Activated CD8-positive, alpha-beta T cell treated with anti-CD3 and anti-CD28 coated beads for 36 hours (primary cell): ENCODE measurements at regions of chr13 and their contacts with region 1.

Region 1: DNA sequence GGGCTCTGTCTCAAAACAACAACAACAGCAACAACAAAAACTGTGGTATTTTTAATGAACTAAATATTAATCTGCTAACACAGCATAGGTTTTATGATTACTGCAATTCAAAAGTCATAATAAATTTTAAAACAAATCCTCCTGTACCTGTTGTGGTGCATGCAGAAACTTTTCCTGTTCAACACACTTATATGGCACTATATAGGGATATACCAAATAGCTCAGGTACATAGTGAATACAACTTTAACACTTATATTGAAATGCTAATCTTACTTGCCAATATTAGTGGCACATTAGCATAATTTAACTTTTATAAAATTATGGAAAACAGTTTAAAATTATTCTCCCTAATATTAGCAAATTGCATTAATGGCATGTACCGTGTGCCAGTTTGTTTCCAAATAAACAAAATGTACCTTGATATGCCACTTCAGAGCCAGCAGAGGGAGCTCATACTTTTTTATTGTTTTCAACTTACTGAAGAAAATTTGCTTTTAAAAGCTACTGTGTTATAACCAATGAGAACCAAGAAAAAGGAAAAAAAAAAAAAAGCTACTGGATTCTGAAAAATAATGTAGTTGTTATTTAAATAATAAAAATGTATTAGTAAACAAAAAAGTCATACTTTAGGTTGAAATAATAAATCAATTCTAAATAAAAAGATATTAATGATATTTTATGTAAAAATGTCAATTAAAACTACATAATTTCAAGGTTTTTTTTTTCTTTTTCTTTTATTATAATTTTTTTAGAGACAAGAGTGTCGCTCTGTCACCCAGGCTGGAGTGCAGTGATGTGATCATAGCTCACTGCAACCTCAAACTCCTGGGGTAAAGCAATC is 18.0 kb upstream of the RBM26 start:
- DNase-seq: no peak
- ATAC-seq: peak; percentile 70
- H3K4me3 Mint-ChIP-seq: no peak overlapping the region
- H3K27ac Mint-ChIP-seq: no peak overlapping the region
- H3K4me1 Mint-ChIP-seq: peaks cover 6% of the 10 kb centered on the region
- H3K27me3 Mint-ChIP-seq: no peaks in the 10 kb centered on the region
- CTCF ChIP-seq: peak; percentile 91

Region 2: GRCh38 chr13:78993792-78994191 is 430.2 kb before region 1 on chr13:
- CTCF ChIA-PET with region 1: no interaction called
- POLR2A ChIA-PET with region 1: no interaction called
- intact Hi-C with region 1: no loop called
- DNase-seq: no peak
- ATAC-seq: no peak
- H3K4me3 Mint-ChIP-seq: no peak overlapping the region
- H3K27ac Mint-ChIP-seq: no peak overlapping the region
- H3K4me1 Mint-ChIP-seq: no peaks in the 10 kb centered on the region
- H3K27me3 Mint-ChIP-seq: peaks cover 4% of the 10 kb centered on the region
- CTCF ChIP-seq: no peak

Region 3: DNA sequence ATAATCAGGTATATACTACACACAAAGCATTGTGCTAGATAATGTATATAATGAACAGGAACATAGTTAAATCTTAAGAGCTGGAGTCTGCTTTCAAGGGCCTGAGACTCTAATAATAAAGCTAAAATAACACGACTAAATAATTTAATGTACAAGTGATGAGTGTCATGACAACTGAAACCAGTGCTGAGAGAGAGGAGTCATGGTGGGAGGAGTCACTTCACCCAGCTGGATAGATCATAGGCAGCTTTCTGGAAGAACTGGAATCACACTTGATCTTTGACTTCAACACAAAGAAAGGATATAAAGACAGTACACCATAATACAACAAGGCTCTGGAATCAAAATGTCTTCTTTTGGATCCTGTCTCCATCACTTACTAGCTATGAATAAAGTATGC is 25.1 kb before region 1 on chr13:
- CTCF ChIA-PET with region 1: interaction called, 12 read pairs
- POLR2A ChIA-PET with region 1: no interaction called
- intact Hi-C with region 1: no loop called
- DNase-seq: peak; percentile 21
- ATAC-seq: peak; percentile 45
- H3K4me3 Mint-ChIP-seq: no peak overlapping the region
- H3K27ac Mint-ChIP-seq: no peak overlapping the region
- H3K4me1 Mint-ChIP-seq: peaks cover 74% of the 10 kb centered on the region
- H3K27me3 Mint-ChIP-seq: no peaks in the 10 kb centered on the region
- CTCF ChIP-seq: no peak

Region 4: DNA sequence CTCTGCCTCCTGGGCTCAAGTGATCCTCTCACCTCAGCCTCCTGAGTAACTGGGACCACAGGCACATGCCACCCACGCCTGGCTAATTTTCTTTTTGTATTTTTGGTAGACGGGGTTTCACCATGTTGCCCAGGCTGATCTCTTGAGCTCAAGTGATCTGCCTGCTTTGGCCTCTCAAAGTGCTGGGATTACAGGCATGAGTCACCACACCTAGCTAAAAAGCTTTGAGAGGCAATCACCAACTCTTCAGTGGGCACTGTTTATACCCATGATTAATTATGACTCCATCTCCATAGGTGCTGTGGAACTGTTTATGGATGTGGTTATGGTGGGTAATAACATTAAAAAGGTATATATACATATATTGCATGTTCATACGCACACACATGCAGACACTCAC is 10.5 kb before region 1 on chr13:
- CTCF ChIA-PET with region 1: interaction called, 16 read pairs
- POLR2A ChIA-PET with region 1: interaction called, 4 read pairs
- intact Hi-C with region 1: no loop called
- DNase-seq: peak; percentile 10
- ATAC-seq: peak; percentile 34
- H3K4me3 Mint-ChIP-seq: no peak overlapping the region
- H3K27ac Mint-ChIP-seq: no peak overlapping the region
- H3K4me1 Mint-ChIP-seq: peaks cover 17% of the 10 kb centered on the region
- H3K27me3 Mint-ChIP-seq: no peaks in the 10 kb centered on the region
- CTCF ChIP-seq: no peak

Region 5: GRCh38 chr13:79440958-79441528 is 17.0 kb after region 1 on chr13:
- CTCF ChIA-PET with region 1: interaction called, 18 read pairs
- POLR2A ChIA-PET with region 1: interaction called, 3 read pairs
- intact Hi-C with region 1: no loop called
- DNase-seq: no peak
- ATAC-seq: no peak
- H3K4me3 Mint-ChIP-seq: no peak overlapping the region
- H3K27ac Mint-ChIP-seq: no peak overlapping the region
- H3K4me1 Mint-ChIP-seq: peaks cover 9% of the 10 kb centered on the region
- H3K27me3 Mint-ChIP-seq: no peaks in the 10 kb centered on the region
- CTCF ChIP-seq: no peak

Region 6: DNA sequence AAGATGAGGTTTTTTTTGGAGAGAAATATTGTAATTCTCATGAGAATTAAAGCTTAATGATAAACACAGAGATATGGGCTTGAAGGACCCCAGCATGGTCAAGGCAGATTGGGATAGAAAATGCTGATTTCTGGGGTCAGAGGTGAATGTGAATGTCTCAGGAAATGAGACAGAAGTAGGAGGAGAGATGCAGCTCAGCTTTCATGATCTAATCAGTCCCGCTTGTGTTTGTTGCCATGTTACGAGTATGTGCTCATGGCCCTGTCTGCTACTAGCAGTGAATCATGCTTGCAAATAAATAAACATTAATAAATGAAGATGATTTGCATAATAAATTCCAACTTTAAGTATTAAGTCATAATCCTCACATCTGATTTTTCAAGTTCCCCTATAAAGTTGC is 33.9 kb after region 1 on chr13:
- CTCF ChIA-PET with region 1: interaction called, 28 read pairs
- POLR2A ChIA-PET with region 1: interaction called, 3 read pairs
- intact Hi-C with region 1: no loop called
- DNase-seq: peak; percentile 49
- ATAC-seq: peak; percentile 85
- H3K4me3 Mint-ChIP-seq: no peak overlapping the region
- H3K27ac Mint-ChIP-seq: no peak overlapping the region
- H3K4me1 Mint-ChIP-seq: peaks cover 27% of the 10 kb centered on the region
- H3K27me3 Mint-ChIP-seq: no peaks in the 10 kb centered on the region
- CTCF ChIP-seq: no peak

Region 7: DNA sequence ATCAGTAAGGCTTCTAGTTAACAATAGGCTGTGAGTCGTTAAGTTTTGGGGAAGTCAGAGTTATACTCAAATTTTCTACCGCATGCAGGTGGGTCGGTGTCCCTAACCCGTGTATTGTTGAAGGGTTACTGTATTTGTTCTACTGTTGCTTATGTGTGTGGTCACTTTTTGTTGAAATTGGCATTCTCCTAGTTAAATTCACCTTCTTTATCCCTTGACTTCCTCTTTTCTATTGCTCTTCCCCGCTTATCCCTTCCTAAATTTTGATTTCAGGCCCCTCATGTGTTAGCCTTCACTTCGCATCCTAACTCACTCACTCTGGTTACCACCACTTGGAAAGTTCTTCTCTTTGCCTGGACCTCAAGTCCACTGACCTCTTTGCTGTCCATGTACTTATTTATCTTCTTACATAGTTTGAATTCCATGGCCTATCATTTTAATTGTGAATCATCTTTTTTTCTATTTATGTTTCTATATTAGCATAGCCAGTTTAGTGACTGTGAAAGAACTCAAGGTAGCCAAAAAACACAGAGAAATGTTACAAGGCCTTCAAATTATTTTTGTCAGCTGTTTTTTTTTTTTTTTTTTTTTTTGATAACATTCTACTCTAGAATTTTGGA is 109.9 kb after region 1 on chr13:
- CTCF ChIA-PET with region 1: interaction called, 156 read pairs
- POLR2A ChIA-PET with region 1: no interaction called
- intact Hi-C with region 1: no loop called
- DNase-seq: no peak
- ATAC-seq: no peak
- H3K4me3 Mint-ChIP-seq: no peak overlapping the region
- H3K27ac Mint-ChIP-seq: no peak overlapping the region
- H3K4me1 Mint-ChIP-seq: peaks cover 18% of the 10 kb centered on the region
- H3K27me3 Mint-ChIP-seq: no peaks in the 10 kb centered on the region
- CTCF ChIP-seq: no peak

Region 8: DNA sequence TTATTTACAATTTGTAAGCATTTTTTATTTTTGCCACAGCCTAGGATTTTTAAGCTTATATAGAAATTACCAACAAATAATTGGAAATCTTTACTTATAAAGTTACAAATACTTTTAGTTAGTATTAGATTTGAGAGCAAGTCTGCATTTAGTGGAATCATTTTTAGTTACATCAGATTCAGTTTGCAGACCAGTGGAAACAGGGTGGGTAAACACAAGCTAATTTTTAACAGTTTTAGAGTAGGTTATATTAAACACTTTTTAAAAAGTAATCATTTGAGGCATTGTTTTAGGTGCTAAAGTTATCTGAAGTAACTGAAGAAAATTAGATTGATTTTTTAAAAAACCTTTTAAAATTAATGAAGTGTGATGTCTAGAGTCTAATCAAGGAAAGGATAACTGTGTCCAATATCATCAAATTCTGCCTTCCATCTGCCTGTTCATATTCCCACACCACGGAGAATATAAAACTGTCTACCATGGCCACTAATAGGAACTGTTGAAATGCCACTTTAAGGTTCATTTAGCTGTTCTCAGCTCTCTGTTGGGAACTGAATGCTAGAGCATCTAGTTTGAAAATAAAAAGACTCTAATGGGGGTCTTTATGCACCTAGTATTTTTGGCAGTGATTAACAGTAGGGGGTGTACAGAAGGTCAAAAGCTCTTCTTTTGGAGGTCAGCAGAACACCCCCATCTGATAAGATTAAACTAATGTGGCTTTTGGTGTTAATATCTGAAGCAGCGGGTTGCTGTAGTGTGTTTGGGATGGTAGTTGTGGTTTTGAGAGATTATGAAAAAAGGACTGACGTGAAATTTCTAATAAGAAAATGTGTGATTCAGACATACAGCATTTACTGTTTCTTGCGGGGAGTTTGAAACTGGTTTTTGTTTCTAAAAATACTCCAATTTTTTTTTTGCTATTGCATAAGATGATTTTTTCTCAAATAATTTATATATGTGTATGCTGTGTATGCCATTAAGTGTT is 123.5 kb after region 1 on chr13:
- CTCF ChIA-PET with region 1: interaction called, 66 read pairs
- POLR2A ChIA-PET with region 1: no interaction called
- intact Hi-C with region 1: no loop called
- DNase-seq: no peak
- ATAC-seq: no peak
- H3K4me3 Mint-ChIP-seq: no peak overlapping the region
- H3K27ac Mint-ChIP-seq: no peak overlapping the region
- H3K4me1 Mint-ChIP-seq: peaks cover 5% of the 10 kb centered on the region
- H3K27me3 Mint-ChIP-seq: no peaks in the 10 kb centered on the region
- CTCF ChIP-seq: no peak